ENCODE measurements at regions of chr15 and their contacts with region 1.

Region 1: GRCh38 chr15:52078876-52079700 is 33.5 kb downstream of the BCL2L10 start:
- DNase-seq: peak; percentile 87
- ATAC-seq: peak; percentile 79
- H3K4me3 Mint-ChIP-seq: no peak overlapping the region
- H3K27ac Mint-ChIP-seq: no peak overlapping the region
- H3K4me1 Mint-ChIP-seq: peaks cover 49% of the 10 kb centered on the region
- H3K27me3 Mint-ChIP-seq: no peaks in the 10 kb centered on the region

Region 2: DNA sequence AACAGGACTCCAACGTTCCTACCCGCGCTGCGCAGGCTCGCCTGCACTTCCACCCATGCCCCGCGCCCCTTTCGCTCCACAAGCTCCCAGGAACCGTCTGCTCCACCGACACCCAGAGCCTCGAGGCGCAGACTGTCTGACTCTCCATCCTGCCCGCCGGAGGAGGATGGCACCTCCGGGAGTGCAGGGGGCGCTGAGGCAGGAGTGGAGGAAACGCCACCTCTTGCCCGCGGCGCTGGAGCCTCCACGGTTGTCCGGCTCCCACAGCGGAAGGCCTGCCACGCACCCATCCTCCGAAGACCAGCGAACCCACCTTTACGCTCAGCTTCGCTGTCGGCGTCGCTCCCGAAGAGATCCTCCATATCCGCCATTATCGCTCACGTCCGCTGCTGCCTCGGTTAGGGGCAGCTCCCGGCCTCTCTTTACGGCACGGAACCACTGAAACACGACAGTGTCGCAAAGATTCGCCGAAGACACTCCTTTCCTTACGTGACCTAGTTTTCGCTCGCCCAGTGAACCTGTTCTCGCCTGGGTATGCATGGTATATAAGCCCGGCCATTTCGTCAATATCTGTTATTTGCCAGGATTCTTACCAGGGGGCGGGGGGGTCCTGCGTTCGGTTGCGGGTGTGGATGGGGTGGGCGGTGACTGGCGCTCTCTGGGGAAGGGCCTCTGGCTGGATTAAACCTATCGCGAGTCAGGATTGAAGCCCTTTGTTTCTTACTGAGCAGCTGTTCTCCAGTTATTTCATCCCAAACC is 107.5 kb before region 1 on chr15 and contains the start of gene LEO1:
- CTCF ChIA-PET with region 1: interaction called, 17 read pairs
- DNase-seq: peak; percentile 96
- ATAC-seq: peak; percentile 94
- H3K4me3 Mint-ChIP-seq: peak within 1 kb of the TSS; percentile 95
- H3K27ac Mint-ChIP-seq: peak within 1 kb of the TSS; percentile 91
- H3K4me1 Mint-ChIP-seq: peaks cover 29% of the 10 kb centered on the region
- H3K27me3 Mint-ChIP-seq: no peaks in the 10 kb centered on the region
- total RNA-seq, gene LEO1: 33.4 to 34.9 TPM

Region 3: DNA sequence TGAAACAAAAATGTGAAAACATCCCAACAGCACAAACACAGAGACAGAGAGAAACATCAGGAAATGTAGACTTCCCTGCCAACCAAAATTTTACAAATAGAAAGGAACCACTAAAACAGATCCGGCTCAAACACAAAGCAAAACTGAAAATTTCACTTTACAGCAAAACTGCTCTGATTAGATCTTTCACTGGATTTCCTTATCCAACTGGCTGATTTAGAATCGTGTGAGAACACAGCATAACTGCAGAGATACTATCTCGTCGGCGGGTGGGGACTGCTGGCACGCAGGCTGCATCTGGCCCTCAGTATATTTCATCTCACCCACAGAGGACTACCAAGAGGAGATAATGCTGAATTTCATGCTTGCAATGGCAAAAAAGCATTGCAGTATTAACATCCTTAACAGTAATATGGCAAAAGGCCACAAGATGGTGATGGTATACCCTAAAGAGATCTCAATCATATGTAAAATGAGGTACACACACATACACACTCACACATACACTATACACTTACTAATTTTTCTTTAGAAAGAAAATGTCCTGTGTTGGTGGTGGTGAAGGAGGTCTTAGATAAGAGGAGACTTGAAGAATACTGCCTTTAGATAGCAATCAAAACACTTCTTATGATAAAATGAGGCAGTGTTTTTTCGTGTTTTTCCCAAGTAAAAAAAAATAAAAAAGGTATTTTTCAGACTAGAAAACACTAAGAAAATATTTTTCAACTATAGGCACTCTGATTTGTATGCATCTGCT is 96.9 kb before region 1 on chr15:
- CTCF ChIA-PET with region 1: interaction called, 29 read pairs
- DNase-seq: peak; percentile 88
- ATAC-seq: peak; percentile 98
- H3K4me3 Mint-ChIP-seq: peak overlapping the region; percentile 76
- H3K27ac Mint-ChIP-seq: peak overlapping the region; percentile 91
- H3K4me1 Mint-ChIP-seq: peaks cover 16% of the 10 kb centered on the region
- H3K27me3 Mint-ChIP-seq: no peaks in the 10 kb centered on the region

Region 4: GRCh38 chr15:52019388-52020220 is 59.5 kb before region 1 on chr15:
- CTCF ChIA-PET with region 1: interaction called, 18 read pairs
- DNase-seq: peak; percentile 83
- ATAC-seq: peak; percentile 64
- H3K4me3 Mint-ChIP-seq: peak overlapping the region; percentile 94
- H3K27ac Mint-ChIP-seq: peak overlapping the region; percentile 99
- H3K4me1 Mint-ChIP-seq: peaks cover 42% of the 10 kb centered on the region
- H3K27me3 Mint-ChIP-seq: no peaks in the 10 kb centered on the region

Region 5: GRCh38 chr15:52112203-52112750 is 33.2 kb after region 1 on chr15:
- CTCF ChIA-PET with region 1: interaction called, 10 read pairs
- DNase-seq: peak; percentile 54
- ATAC-seq: peak; percentile 82
- H3K4me3 Mint-ChIP-seq: peak overlapping the region; percentile 69
- H3K27ac Mint-ChIP-seq: no peak overlapping the region
- H3K4me1 Mint-ChIP-seq: peaks cover 8% of the 10 kb centered on the region
- H3K27me3 Mint-ChIP-seq: peaks cover 46% of the 10 kb centered on the region

Region 6: DNA sequence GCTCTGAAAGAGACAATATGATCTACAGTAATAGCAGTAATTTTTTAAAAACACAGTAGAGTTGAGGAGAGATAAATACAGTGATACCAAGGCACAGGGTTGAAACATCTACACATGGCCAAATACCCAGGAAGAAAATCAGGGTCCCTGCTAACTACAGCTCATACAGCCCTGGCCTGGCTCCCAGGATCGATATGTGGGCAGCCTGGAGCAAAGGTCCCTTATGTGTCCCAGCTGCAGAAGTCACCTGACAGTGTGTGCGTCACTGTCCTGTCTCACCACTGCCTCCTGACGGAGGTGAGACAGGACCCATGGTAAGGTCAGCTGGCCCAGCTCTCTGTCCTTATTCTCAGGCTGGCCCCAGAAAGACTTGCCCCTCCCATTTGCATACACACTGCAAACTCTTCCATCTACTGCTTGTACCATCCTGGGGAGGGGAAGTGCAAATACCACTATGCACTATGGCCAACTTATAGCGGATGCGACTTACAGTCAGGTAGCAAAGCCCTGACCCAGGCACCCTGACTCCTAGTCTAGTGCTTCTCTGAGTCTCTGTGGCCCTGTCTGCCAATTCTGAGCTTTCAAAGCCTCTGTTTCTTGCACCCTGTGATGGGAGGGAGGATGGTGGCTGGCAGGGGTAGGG is 55.5 kb after region 1 on chr15:
- CTCF ChIA-PET with region 1: interaction called, 13 read pairs
- DNase-seq: no peak
- ATAC-seq: no peak
- H3K4me3 Mint-ChIP-seq: no peak overlapping the region
- H3K27ac Mint-ChIP-seq: no peak overlapping the region
- H3K4me1 Mint-ChIP-seq: peaks cover 17% of the 10 kb centered on the region
- H3K27me3 Mint-ChIP-seq: no peaks in the 10 kb centered on the region